Cardiac septum (tissue), 1 donor: ENCODE measurements at regions of chr3 and their contacts with region 1.

Region 1: DNA sequence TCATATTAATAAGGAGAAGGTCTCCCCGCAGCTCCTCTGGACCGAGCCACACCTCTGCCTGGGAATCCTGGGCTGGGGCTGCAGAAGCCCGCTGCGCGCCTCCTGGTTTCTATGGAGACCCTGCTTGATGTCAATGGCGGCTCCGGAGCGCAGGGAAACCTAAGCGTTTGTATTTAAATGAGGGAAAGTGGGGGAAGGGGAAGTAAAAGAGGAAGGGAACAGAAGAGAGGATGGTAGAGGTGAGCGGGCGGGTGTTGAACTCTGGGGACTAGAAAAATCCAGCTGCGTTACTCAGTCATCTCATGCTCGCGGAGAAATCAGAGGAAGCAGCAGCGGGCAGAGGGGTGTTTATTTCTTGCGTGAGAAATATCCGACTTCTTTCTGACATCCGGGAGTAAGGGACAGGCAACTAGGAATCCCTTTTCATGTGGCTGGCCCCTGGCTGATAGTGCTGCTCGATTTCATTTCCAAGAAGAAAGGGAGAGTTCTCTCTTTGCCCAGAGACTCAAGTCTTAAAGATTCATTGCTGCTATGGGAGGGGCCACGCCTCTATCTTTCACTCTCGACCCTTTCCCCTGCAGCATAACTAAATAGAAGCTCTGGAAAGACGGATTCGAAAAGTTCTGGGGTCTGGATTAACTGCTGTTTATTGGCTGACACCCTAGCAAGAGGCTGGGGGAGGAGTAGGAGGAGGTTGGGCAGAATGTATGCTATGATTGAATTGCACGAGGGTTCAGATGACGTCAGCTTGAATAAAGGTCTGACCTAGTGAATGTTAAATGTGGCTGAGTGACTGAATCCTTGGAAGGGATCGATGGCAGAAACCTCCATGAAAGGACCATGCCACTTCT is 110.5 kb upstream of the GAP43 start:
- DNase-seq: no peak

Region 2: DNA sequence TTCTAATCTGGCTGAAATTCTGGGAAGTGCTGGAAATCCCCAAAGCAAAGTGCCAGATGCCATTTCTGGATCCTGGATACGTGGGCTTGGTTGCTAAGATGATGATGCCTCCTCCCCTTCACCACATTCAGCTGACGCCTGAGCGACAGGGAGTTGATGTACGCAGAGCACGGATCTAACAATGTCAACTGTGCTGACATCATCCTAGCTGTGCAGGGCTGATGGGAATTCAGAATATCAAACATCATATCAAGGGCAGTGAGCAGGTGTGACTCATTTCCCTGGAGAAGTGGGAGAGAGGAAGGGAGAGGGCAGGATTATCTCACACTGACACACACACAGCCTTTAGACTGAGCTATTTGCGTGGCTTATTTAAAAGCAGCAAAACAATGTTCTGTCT is 273.1 kb before region 1 on chr3:
- intact Hi-C with region 1: loop called (anchors 10 kb)
- DNase-seq: peak; percentile 85

Region 3: GRCh38 chr3:115588201-115589115 is 75.7 kb after region 1 on chr3:
- intact Hi-C with region 1: no loop called
- DNase-seq: no peak

Region 4: DNA sequence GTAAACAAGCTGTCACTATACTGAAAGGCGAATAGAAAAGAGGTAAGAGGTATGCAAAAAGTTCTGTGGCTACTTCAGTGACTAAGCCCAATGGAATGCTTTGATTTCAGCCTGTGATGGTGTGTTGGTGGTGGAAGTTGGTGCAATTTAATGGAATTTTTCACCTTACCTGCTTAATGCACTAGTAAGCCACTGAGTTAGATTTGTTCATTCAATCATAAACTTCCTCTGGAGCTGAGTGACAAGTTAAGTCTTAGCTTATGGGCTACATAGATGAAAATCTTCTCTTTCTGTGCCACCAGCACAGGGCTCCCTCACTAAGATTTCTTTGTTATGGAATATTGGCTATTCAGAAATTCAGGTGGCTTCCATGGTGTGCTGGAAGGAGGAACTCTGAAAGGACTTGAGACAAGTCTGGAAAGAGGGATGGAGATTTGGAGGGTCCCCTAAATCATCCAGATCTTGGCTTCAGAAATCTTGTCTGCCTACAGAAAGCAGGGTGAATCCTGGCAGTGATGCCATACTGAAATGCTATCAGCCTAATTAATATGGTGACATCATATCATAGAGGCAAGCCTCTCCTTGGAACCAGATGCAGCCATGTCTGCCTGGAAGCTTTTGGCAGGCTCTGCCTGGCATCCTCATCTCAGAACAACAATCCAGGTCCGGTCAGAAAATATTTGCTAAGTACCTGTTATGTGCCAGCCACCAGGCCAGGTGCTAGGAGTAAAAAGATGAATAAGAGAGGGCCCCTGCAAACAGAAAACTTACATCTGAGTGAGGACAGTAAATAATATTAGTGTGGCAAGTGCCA is 102.4 kb after region 1 on chr3:
- intact Hi-C with region 1: no loop called
- DNase-seq: no peak

Region 5: GRCh38 chr3:115658337-115659181 is 145.8 kb after region 1 on chr3:
- intact Hi-C with region 1: loop called (anchors 5 kb)
- DNase-seq: peak; percentile 88